PC-3 (cell line): ENCODE measurements at regions of chr3 and their contacts with region 1.

Region 1: DNA sequence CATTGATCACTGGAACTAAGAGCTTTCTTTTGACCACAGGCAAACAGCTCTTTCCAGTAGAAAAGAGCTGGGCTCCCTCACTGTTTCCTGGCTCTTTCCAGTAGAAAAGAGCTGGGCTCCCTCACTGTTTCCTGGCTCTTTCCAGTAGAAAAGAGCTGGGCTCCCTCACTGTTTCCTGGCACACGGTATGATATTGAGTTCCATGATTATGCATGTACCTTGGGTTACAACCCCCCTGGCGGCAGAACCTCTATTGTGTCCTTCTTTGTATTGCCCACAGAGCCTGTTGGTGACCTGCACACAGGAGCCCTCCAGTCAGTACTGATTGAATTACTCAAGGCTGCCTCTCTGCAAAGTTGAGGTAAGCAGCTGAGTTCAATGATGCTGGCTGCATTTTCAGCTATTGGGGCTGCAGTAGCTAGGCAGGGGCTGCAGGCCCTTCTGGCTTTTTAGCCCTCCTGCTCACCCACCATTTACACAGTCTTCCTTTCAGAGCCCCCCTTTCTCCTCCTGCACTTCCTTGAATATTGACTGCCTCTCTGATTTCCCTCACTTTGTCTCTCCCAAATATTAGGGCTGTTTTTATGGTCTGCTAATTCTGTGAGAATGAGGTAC is 10.2 kb downstream of the ACKR2 start:
- DNase-seq: peak; percentile 59
- ATAC-seq: peak; percentile 21
- H3K4me3 ChIP-seq: peak overlapping the region; percentile 32
- H3K27ac ChIP-seq: peak overlapping the region; percentile 99
- H3K4me1 ChIP-seq: peaks cover 59% of the 10 kb centered on the region
- H3K27me3 ChIP-seq: no peaks in the 10 kb centered on the region
- CTCF ChIP-seq: no peak; the same call in 1 of the 2 replicates

Region 2: GRCh38 chr3:42159706-42160472 is 659.6 kb before region 1 on chr3:
- CTCF ChIA-PET with region 1: no interaction called
- POLR2A ChIA-PET with region 1: no interaction called
- intact Hi-C with region 1: loop called (anchors 10 kb)
- DNase-seq: no peak
- ATAC-seq: no peak
- H3K4me3 ChIP-seq: no peak overlapping the region
- H3K27ac ChIP-seq: peak overlapping the region; percentile 75
- H3K4me1 ChIP-seq: peaks cover 67% of the 10 kb centered on the region
- H3K27me3 ChIP-seq: no peaks in the 10 kb centered on the region
- CTCF ChIP-seq: no peak